Panc1 (cell line): ENCODE measurements at regions of chr6 and their contacts with region 1.

Region 1: GRCh38 chr6:112337209-112337638 is 9.9 kb upstream of the RFPL4B start:
- DNase-seq: peak; percentile 50
- ATAC-seq: peak; percentile 97
- H3K4me3 ChIP-seq: no peak overlapping the region
- H3K27ac ChIP-seq: no peak overlapping the region
- H3K4me1 ChIP-seq: no peaks in the 10 kb centered on the region
- H3K27me3 ChIP-seq: no peaks in the 10 kb centered on the region
- CTCF ChIP-seq: peak; percentile 93

Region 2: DNA sequence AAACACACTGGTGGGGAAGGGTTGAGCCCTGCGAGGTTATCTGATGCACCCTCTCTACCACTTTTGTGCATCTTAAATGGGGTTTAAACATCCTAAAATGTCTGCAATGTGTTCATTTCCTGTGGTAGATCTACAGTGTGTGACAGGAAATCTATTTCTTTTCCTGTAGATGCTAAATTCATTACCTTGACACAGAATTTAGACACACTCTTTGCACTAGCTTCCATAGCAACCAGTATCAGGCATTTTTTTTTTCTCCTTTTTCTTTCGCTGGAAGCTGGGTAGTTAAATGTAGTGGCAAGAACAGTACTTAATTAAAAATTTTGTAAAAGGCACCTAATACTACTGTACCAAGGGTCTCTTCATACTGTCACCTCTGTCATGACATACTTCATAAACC is 151.0 kb after region 1 on chr6:
- CTCF ChIA-PET with region 1: no interaction called
- POLR2A ChIA-PET with region 1: no interaction called
- in situ Hi-C with region 1: no loop called
- intact Hi-C with region 1: no loop called
- DNase-seq: no peak
- ATAC-seq: no peak
- H3K4me3 ChIP-seq: no peak overlapping the region
- H3K27ac ChIP-seq: no peak overlapping the region
- H3K4me1 ChIP-seq: no peaks in the 10 kb centered on the region
- H3K27me3 ChIP-seq: no peaks in the 10 kb centered on the region
- CTCF ChIP-seq: no peak

Region 3: DNA sequence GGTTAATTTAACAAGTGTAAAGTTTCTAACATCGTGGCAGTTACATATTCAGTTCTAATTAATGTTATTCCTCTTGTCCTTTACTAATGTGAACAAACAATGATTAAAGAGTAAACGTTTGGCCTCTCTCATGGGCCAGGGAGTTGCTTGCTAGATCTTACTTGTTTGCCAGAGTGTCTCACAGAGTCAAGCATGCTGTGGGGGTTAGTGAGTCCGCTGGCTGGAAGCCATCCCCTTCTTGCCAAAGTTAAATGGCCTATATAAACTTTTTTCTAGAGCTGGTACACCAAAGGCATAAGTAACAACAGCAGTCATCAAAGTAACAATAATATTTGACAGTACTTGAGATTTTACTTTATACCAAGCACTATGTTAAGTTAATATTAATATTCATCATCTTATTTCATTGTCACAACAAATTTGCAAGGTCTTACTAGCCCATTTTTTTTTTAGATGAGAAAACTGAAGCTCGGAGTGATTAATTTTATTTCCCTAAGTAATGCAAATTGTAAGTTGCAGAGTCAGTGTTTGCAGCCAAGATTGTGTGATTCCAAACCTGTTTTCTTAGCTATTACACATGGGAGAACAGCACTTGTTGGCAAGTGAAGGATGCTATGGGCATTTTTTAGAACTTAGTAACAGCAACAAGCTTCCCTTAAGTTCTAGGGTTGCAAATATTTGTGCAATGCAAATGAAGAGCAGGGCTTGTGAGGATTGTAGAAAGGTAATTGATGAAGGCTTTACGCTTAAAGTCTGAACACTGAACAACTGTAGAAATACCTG is 234.5 kb after region 1 on chr6:
- CTCF ChIA-PET with region 1: no interaction called
- POLR2A ChIA-PET with region 1: no interaction called
- in situ Hi-C with region 1: no loop called
- intact Hi-C with region 1: no loop called
- DNase-seq: no peak
- ATAC-seq: no peak
- H3K4me3 ChIP-seq: no peak overlapping the region
- H3K27ac ChIP-seq: no peak overlapping the region; the same call in 1 of the 2 replicates
- H3K4me1 ChIP-seq: no peaks in the 10 kb centered on the region
- H3K27me3 ChIP-seq: no peaks in the 10 kb centered on the region
- CTCF ChIP-seq: no peak

Region 4: GRCh38 chr6:113050010-113050858 is 713.0 kb after region 1 on chr6:
- CTCF ChIA-PET with region 1: no interaction called
- POLR2A ChIA-PET with region 1: interaction called, 15 read pairs
- in situ Hi-C with region 1: no loop called
- intact Hi-C with region 1: no loop called
- DNase-seq: no peak
- ATAC-seq: no peak
- H3K4me3 ChIP-seq: no peak overlapping the region
- H3K27ac ChIP-seq: no peak overlapping the region
- H3K4me1 ChIP-seq: no peaks in the 10 kb centered on the region
- H3K27me3 ChIP-seq: no peaks in the 10 kb centered on the region
- CTCF ChIP-seq: no peak

Region 5: DNA sequence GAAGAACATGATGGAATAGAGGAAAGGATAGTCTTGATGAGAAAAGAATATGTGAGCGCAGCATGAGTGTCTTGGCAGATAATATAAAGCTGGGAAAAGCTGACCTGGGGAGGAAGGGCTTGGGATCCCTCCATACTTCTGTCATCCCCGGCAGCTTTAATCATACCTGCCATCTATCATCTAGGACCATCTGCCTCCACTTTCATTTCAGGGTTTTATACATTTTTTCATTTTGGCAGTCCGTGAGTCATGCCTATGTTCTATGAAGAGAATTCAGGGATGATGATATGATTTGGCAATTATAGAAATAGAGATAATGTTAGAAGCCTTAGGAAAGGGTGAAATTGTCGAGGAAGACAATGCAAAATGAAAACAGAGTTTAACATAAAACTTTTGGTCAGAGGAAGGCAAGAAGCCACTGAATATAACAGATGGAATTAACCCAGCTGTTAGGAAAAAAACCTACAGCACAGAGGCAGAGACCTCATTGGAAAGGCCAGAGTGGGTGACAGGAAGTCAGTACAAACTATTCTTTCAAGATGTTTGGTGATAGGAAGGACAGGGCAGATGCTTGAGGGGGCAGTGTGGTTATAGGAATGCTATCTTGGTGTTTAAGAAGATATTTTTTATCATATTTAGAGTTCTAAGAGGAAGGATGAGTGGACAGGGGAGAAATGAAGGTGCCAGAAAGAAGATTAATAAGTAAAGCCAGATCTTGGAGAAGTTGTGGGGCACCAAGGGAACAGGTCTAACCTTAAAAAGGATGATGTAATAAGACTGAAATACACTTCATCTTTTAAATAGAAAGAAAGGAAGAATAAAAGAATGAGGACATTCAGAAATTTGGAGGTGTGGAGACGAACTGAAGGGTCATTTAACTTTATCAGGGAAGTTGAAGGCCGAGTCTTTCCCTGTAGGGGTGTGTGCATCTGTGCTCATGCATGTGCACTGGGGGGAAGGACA is 1557.8 kb after region 1 on chr6:
- CTCF ChIA-PET with region 1: no interaction called
- POLR2A ChIA-PET with region 1: no interaction called
- in situ Hi-C with region 1: no loop called
- intact Hi-C with region 1: loop called (anchors 10 kb)
- DNase-seq: no peak
- ATAC-seq: no peak
- H3K4me3 ChIP-seq: no peak overlapping the region
- H3K27ac ChIP-seq: no peak overlapping the region
- H3K4me1 ChIP-seq: no peaks in the 10 kb centered on the region
- H3K27me3 ChIP-seq: no peaks in the 10 kb centered on the region
- CTCF ChIP-seq: no peak